ENCODE measurements at regions of chr7 and their contacts with region 1.

Region 1: GRCh38 chr7:95608359-95609173 is 12.2 kb upstream of the PDK4 start:
- DNase-seq: peak; percentile 74
- ATAC-seq: peak; percentile 94
- H3K4me3 ChIP-seq: peak overlapping the region; percentile 15 to 60 (median 34)
- H3K4me3 Mint-ChIP-seq: peak overlapping the region; percentile 90
- H3K27ac ChIP-seq: peak overlapping the region; percentile 71 to 72
- H3K27ac Mint-ChIP-seq: peak overlapping the region; percentile 97
- H3K4me1 ChIP-seq: peaks cover 38 to 42% of the 10 kb centered on the region in 2 donors
- H3K4me1 Mint-ChIP-seq: peaks cover 60% of the 10 kb centered on the region
- H3K27me3 ChIP-seq: no peaks in the 10 kb centered on the region
- H3K27me3 Mint-ChIP-seq: no peaks in the 10 kb centered on the region
- CTCF ChIP-seq: no peak

Region 2: DNA sequence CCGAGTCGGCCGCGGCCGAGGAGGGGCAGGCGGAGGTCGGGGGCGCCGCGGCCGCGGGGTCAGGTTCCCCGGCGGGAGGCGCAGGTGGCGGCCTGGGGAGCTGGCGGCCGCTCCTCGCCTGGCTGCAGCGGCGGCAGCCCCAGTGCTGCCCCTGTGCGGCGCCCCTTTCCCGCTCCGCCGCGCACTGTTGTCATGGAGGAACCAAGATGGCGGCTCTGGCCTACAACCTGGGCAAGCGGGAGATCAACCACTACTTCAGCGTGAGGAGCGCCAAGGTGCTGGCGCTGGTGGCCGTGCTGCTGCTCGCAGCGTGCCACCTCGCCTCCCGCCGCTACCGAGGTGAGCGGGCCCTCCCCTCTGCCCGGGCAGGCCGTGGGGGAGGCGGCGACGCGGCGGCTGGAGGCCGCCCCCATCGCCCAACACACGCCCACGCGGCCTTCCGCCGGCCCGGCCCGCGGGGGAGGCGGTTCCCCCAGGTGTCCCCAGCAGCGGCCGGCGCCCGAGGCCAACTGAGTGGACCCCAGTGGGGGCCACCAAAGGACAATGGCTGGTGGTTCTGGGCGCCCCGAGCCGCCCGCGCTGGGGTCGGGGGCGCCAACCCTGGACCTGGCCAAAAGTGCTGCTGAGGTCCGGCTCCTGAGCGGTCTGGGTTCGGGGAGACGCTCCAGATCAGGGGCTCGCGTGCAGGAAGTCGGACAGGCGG is 1098.5 kb before region 1 on chr7:
- CTCF ChIA-PET with region 1: no interaction called
- POLR2A ChIA-PET with region 1: no interaction called
- intact Hi-C with region 1: loop called (anchors 1 kb)
- DNase-seq: peak; percentile 88
- ATAC-seq: peak; percentile 76
- H3K4me3 ChIP-seq: peak overlapping the region; percentile 31 to 80 (median 73)
- H3K4me3 Mint-ChIP-seq: peak overlapping the region; percentile 88
- H3K27ac ChIP-seq: peak overlapping the region; percentile 77 to 92
- H3K27ac Mint-ChIP-seq: peak overlapping the region; percentile 93
- H3K4me1 ChIP-seq: peaks cover 18 to 20% of the 10 kb centered on the region in 2 donors
- H3K4me1 Mint-ChIP-seq: peaks cover 46% of the 10 kb centered on the region
- H3K27me3 ChIP-seq: no peaks in the 10 kb centered on the region
- H3K27me3 Mint-ChIP-seq: no peaks in the 10 kb centered on the region
- CTCF ChIP-seq: peak; percentile 5

Region 3: GRCh38 chr7:95527033-95527775 is 81.4 kb before region 1 on chr7:
- CTCF ChIA-PET with region 1: interaction called, 11 read pairs
- POLR2A ChIA-PET with region 1: no interaction called
- intact Hi-C with region 1: loop called (anchors 1 kb)
- DNase-seq: peak; percentile 69
- ATAC-seq: peak; percentile 69
- H3K4me3 ChIP-seq: no peak overlapping the region
- H3K4me3 Mint-ChIP-seq: no peak overlapping the region
- H3K27ac ChIP-seq: no peak overlapping the region
- H3K27ac Mint-ChIP-seq: no peak overlapping the region
- H3K4me1 ChIP-seq: no peaks in the 10 kb centered on the region
- H3K4me1 Mint-ChIP-seq: peaks cover 3% of the 10 kb centered on the region
- H3K27me3 ChIP-seq: no peaks in the 10 kb centered on the region
- H3K27me3 Mint-ChIP-seq: peaks cover 8% of the 10 kb centered on the region
- CTCF ChIP-seq: peak; percentile 91

Region 4: DNA sequence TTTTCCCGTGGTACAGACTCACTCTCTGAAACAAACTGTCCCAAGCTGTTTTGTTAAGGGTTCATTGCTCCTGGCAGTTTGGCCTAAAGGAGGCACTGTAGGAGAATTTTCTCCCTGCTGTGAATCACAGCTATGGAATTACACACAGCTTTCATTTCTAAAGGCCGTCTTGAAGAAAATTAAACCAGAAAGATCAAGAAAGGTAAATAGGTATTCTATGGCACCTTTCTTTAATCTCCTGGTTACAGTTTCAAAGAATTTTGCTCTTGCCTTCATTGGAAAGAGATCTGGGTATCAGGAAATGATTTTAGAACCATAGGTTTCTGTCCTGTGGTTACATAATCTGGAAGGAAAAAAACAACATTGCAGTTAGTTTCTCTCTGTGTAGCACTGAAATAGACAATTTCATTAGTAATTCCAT is 63.5 kb before region 1 on chr7:
- CTCF ChIA-PET with region 1: interaction called, 5 read pairs
- POLR2A ChIA-PET with region 1: no interaction called
- intact Hi-C with region 1: loop called (anchors 5 kb)
- DNase-seq: peak; percentile 26
- ATAC-seq: no peak
- H3K4me3 ChIP-seq: no peak overlapping the region
- H3K4me3 Mint-ChIP-seq: peak overlapping the region; percentile 0
- H3K27ac ChIP-seq: no peak overlapping the region
- H3K27ac Mint-ChIP-seq: no peak overlapping the region
- H3K4me1 ChIP-seq: peaks cover 3 to 8% of the 10 kb centered on the region in 2 donors
- H3K4me1 Mint-ChIP-seq: peaks cover 9% of the 10 kb centered on the region
- H3K27me3 ChIP-seq: no peaks in the 10 kb centered on the region
- H3K27me3 Mint-ChIP-seq: peaks cover 3% of the 10 kb centered on the region
- CTCF ChIP-seq: no peak

Region 5: DNA sequence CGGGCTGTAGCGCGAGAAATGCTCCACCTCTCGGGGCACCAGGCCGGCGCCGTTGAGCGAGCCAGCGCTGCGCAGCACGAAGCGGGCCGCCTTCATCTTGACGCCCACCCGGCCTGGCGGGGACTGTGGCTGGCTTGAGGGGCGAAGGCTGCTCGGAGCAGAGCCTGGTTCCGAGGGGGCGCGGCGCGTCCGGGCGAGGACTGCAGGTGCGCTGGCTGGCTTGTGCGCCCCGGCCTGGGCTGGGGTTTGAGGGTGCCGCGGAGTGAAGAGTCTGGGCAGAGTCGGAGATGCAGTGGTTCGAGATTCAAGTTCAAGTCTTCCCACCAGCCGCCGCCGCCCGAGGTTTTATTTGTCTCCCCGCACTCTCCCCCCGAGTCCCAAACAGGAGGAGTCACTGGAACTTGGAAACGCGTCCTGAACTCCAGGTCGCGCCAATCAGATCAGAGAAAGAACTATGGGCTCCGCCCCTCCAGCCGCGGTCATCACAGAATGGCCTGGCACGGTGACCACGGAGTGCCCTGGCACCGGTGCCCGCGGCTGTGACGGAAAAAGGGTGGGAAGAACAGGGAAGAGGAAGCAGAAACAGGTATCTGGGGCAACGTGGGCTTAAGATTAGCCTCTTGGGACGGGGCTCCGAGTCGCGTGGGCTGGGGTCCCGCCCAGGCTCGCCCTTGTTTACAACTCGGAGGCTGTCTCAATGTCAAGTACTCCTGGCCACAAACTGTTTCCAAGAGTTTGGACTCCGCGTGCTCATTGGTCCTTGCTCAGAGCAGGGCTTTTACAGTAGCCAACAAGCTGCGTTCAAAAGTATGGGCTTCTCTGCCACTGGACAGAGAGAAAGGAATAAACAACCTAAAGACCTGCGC is 12.1 kb before region 1 on chr7 and contains the start of gene PDK4:
- CTCF ChIA-PET with region 1: interaction called, 10 read pairs
- POLR2A ChIA-PET with region 1: interaction called, 7 read pairs
- intact Hi-C with region 1: loop called (anchors 1 kb)
- DNase-seq: peak; percentile 34
- ATAC-seq: peak; percentile 68
- H3K4me3 ChIP-seq: peak within 1 kb of the TSS; percentile 8 to 73 (median 60)
- H3K4me3 Mint-ChIP-seq: peak within 1 kb of the TSS; percentile 96
- H3K27ac ChIP-seq: peak within 1 kb of the TSS; percentile 38 to 53
- H3K27ac Mint-ChIP-seq: peak within 1 kb of the TSS; percentile 87
- H3K4me1 ChIP-seq: peaks cover 15 to 20% of the 10 kb centered on the region in 2 donors
- H3K4me1 Mint-ChIP-seq: peaks cover 31% of the 10 kb centered on the region
- H3K27me3 ChIP-seq: peaks cover 0 to 6% (median 0%) of the 10 kb centered on the region in 4 experiments
- H3K27me3 Mint-ChIP-seq: peaks cover 12% of the 10 kb centered on the region
- CTCF ChIP-seq: no peak
- total RNA-seq, gene PDK4: 6.8 and 7.1 TPM in 2 replicates

Region 6: DNA sequence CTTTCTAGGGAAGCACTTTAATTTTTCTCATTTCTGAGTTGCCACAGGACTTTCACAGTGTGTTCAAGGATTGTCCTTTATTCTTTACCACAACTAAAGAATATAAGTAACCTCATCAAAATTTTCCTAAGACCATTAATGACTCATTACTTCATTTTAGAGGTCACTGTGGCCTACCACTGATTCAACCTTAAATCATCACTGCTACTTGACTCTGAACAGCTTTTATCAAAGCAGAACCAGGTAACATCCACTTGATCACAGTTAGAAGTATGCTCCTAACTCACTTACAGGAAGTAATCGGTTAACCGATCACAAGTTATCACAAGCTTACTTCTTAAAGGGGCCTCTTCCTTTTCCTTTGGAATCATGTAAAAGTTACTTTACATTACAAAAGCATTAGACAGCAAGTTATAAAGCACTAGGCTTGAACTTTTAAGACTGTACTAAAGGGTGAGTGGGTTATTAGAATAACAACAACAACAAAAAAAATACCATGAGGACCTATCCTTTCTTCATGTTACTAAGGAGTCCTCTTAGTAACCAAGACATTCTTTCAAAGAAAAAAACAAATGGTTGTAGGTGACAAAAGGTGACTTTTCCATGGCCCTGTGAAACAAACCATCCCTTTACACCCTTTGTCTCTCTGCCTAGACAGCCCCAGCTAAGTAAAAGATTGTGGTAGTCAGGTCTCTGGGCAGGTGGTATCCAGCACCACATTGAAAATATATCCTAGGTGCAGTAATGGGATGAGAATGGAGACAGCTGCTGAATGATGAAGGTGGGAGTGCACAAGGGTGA is 27.8 kb after region 1 on chr7:
- CTCF ChIA-PET with region 1: interaction called, 7 read pairs
- POLR2A ChIA-PET with region 1: no interaction called
- intact Hi-C with region 1: loop called (anchors 2 kb)
- DNase-seq: peak; percentile 7
- ATAC-seq: no peak
- H3K4me3 ChIP-seq: no peak overlapping the region
- H3K4me3 Mint-ChIP-seq: no peak overlapping the region
- H3K27ac ChIP-seq: no peak overlapping the region
- H3K27ac Mint-ChIP-seq: no peak overlapping the region
- H3K4me1 ChIP-seq: peaks cover 0 to 6% of the 10 kb centered on the region in 2 donors
- H3K4me1 Mint-ChIP-seq: peaks cover 13% of the 10 kb centered on the region
- H3K27me3 ChIP-seq: no peaks in the 10 kb centered on the region
- H3K27me3 Mint-ChIP-seq: no peaks in the 10 kb centered on the region
- CTCF ChIP-seq: no peak

Region 7: GRCh38 chr7:97117372-97118188 is 1509.0 kb after region 1 on chr7 and contains the start of gene SDHAF3:
- CTCF ChIA-PET with region 1: no interaction called
- POLR2A ChIA-PET with region 1: no interaction called
- intact Hi-C with region 1: loop called (anchors 10 kb)
- DNase-seq: peak; percentile 98
- ATAC-seq: peak; percentile 85
- H3K4me3 ChIP-seq: peak within 1 kb of the TSS; percentile 71 to 99 (median 88)
- H3K4me3 Mint-ChIP-seq: peak within 1 kb of the TSS; percentile 92
- H3K27ac ChIP-seq: peak within 1 kb of the TSS; percentile 85 to 90
- H3K27ac Mint-ChIP-seq: peak within 1 kb of the TSS; percentile 96
- H3K4me1 ChIP-seq: peaks cover 24 to 25% of the 10 kb centered on the region in 2 donors
- H3K4me1 Mint-ChIP-seq: peaks cover 51% of the 10 kb centered on the region
- H3K27me3 ChIP-seq: no peaks in the 10 kb centered on the region
- H3K27me3 Mint-ChIP-seq: no peaks in the 10 kb centered on the region
- CTCF ChIP-seq: peak; percentile 23
- total RNA-seq, gene SDHAF3: 18.5 and 20.2 TPM in 2 replicates

Measured in B cell (primary cell).